Caco-2 (cell line): ENCODE measurements at regions of chr2 and their contacts with region 1.

Region 1: GRCh38 chr2:170715062-170715931 is at the start of gene SP5:
- DNase-seq: peak; percentile 95
- H3K4me3 ChIP-seq: peak within 1 kb of the TSS; percentile 62
- H3K4me3 Mint-ChIP-seq: peak within 1 kb of the TSS; percentile 100
- H3K27ac Mint-ChIP-seq: peak within 1 kb of the TSS; percentile 84
- H3K4me1 ChIP-seq: peaks cover 15% of the 10 kb centered on the region; the same call in 1 of the 2 replicates
- H3K4me1 Mint-ChIP-seq: peaks cover 6% of the 10 kb centered on the region
- H3K27me3 ChIP-seq: no peaks in the 10 kb centered on the region
- H3K27me3 Mint-ChIP-seq: no peaks in the 10 kb centered on the region
- CTCF ChIP-seq: peak in 1 of 2 experiments; percentile 14
- total RNA-seq, gene SP5: 149 and 161 TPM in 2 replicates

Region 2: GRCh38 chr2:170409164-170409535 is 306.1 kb before region 1 on chr2:
- CTCF ChIA-PET with region 1: interaction called, 8 read pairs
- POLR2A ChIA-PET with region 1: interaction called, 3 read pairs
- intact Hi-C with region 1: loop called (anchors 1 kb)
- DNase-seq: peak; percentile 74 to 83
- H3K4me3 ChIP-seq: no peak overlapping the region; the same call in 1 of the 2 replicates
- H3K4me3 Mint-ChIP-seq: peak overlapping the region; percentile 69
- H3K27ac Mint-ChIP-seq: peak overlapping the region; percentile 52
- H3K4me1 ChIP-seq: no peaks in the 10 kb centered on the region
- H3K4me1 Mint-ChIP-seq: peaks cover 6% of the 10 kb centered on the region
- H3K27me3 ChIP-seq: no peaks in the 10 kb centered on the region
- H3K27me3 Mint-ChIP-seq: no peaks in the 10 kb centered on the region
- CTCF ChIP-seq: peak; percentile 82 to 93

Region 3: DNA sequence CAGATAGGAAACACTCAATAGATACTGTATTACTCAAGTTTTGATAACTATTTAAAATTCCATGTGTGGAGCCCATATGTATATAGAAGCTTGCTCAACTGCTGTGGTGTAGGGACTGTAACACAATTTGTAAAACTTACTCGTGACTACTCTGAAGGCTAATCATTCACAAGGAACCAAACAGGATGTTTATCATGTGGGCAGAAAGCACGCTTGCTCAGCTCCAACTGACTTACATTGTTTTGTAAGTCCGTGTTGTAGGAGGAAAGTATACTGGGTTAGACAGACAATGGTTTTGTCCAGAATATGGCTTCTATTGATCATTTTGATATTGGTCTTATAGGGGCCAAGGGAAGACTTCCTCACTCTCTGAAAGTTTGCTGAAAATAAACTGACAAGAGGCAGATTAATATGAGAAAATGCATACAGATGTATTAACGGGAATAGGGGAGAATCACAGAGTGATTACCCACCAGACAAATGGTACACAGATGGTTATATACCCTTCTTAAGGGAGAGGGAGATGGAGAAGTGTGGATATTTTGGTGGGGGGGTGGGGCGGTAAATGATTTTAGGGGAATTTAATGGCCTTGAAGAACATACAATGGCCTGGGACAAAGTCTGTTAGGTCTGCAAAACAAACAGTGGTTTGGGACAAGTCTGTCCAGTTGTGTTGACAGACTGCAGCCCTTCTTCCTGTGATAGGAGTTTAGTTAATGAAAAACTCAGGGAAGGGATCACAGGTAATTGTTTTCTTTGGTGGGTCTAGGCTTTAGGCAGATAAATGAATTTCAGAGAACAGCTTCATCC is 259.5 kb before region 1 on chr2:
- CTCF ChIA-PET with region 1: no interaction called
- POLR2A ChIA-PET with region 1: no interaction called
- intact Hi-C with region 1: loop called (anchors 2 kb)
- DNase-seq: peak; percentile 74 to 77
- H3K4me3 ChIP-seq: no peak overlapping the region
- H3K4me3 Mint-ChIP-seq: peak overlapping the region; percentile 57
- H3K27ac Mint-ChIP-seq: peak overlapping the region; percentile 49
- H3K4me1 ChIP-seq: peaks cover 36% of the 10 kb centered on the region
- H3K4me1 Mint-ChIP-seq: peaks cover 43% of the 10 kb centered on the region
- H3K27me3 ChIP-seq: no peaks in the 10 kb centered on the region
- H3K27me3 Mint-ChIP-seq: no peaks in the 10 kb centered on the region
- CTCF ChIP-seq: no peak

Region 4: GRCh38 chr2:170530284-170530745 is 185.0 kb before region 1 on chr2:
- CTCF ChIA-PET with region 1: no interaction called
- POLR2A ChIA-PET with region 1: no interaction called
- intact Hi-C with region 1: loop called (anchors 5 kb)
- DNase-seq: peak; percentile 55 to 76
- H3K4me3 ChIP-seq: no peak overlapping the region
- H3K4me3 Mint-ChIP-seq: peak overlapping the region; percentile 58
- H3K27ac Mint-ChIP-seq: no peak overlapping the region
- H3K4me1 ChIP-seq: peaks cover 21% of the 10 kb centered on the region
- H3K4me1 Mint-ChIP-seq: peaks cover 32% of the 10 kb centered on the region
- H3K27me3 ChIP-seq: no peaks in the 10 kb centered on the region
- H3K27me3 Mint-ChIP-seq: no peaks in the 10 kb centered on the region
- CTCF ChIP-seq: peak in 1 of 2 experiments; percentile 10

Region 5: DNA sequence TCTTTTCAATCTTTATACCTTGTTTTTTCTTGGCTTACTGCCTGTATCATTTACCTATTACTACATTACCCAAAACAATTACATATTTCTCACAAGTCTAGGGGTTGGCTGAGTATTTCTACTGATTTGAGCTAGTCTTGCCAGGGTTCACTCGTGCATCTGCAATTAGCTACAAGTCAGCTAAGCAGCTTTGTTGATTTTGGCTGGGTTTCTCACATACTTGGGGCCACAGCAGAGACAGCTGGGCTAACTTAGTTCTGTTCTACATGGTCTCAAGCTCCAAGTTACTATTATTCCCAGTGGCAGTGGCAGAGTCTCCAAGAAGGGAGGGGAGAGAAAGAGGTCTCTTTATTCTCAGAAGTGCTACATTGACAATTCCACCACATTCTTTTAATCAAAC is 54.9 kb before region 1 on chr2:
- CTCF ChIA-PET with region 1: no interaction called
- POLR2A ChIA-PET with region 1: no interaction called
- intact Hi-C with region 1: no loop called
- DNase-seq: no peak
- H3K4me3 ChIP-seq: no peak overlapping the region
- H3K4me3 Mint-ChIP-seq: no peak overlapping the region
- H3K27ac Mint-ChIP-seq: no peak overlapping the region
- H3K4me1 ChIP-seq: no peaks in the 10 kb centered on the region
- H3K4me1 Mint-ChIP-seq: peaks cover 3% of the 10 kb centered on the region
- H3K27me3 ChIP-seq: no peaks in the 10 kb centered on the region
- H3K27me3 Mint-ChIP-seq: no peaks in the 10 kb centered on the region
- CTCF ChIP-seq: no peak

Region 6: GRCh38 chr2:170770606-170771420 is 55.5 kb after region 1 on chr2:
- CTCF ChIA-PET with region 1: no interaction called
- POLR2A ChIA-PET with region 1: interaction called, 10 read pairs
- intact Hi-C with region 1: loop called (anchors 1 kb)
- DNase-seq: peak; percentile 93
- H3K4me3 ChIP-seq: peak overlapping the region; percentile 80
- H3K4me3 Mint-ChIP-seq: peak overlapping the region; percentile 93
- H3K27ac Mint-ChIP-seq: peak overlapping the region; percentile 97
- H3K4me1 ChIP-seq: peaks cover 37% of the 10 kb centered on the region
- H3K4me1 Mint-ChIP-seq: peaks cover 19% of the 10 kb centered on the region
- H3K27me3 ChIP-seq: no peaks in the 10 kb centered on the region
- H3K27me3 Mint-ChIP-seq: no peaks in the 10 kb centered on the region
- CTCF ChIP-seq: no peak